Heart right ventricle (tissue), 16 donors: ENCODE measurements at regions of chr2 and their contacts with region 1.

Region 1: DNA sequence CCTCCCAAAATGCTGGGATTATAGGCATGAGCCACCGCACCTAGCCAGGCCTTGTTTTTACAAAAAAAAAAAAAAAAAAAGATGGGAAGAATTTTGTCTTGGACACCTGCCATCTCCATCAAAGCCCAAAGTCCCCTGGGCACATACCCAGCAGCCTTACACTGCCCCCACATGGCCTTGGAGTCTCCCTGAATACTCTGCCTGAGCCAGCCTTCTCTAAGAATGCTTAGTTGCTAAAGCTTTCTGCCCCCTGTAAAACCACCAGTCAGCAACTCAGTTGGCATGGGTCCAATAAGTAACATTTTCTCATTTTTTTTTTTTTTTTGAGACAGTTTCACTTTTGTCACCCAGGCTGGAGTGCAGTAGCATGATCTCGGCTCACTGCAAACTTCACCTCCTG is 40.6 kb downstream of the SPC25 start:
- DNase-seq: peak in 1 of 2 donors; percentile 39
- ATAC-seq: peak in 7 of 8 donors; percentile 48 to 82 (median 74)
- H3K4me3 ChIP-seq: no peak overlapping the region
- H3K27ac ChIP-seq: no peak overlapping the region
- H3K4me1 ChIP-seq: peaks cover 0 to 4% (median 0%) of the 10 kb centered on the region in 9 donors
- H3K27me3 ChIP-seq: no peaks in the 10 kb centered on the region
- CTCF ChIP-seq: peak in 7 of 9 donors; percentile 29 to 55 (median 46)

Region 2: GRCh38 chr2:168601741-168602140 is 247.9 kb before region 1 on chr2:
- intact Hi-C with region 1: no loop called
- DNase-seq: no peak
- ATAC-seq: no peak
- H3K4me3 ChIP-seq: no peak overlapping the region
- H3K27ac ChIP-seq: no peak overlapping the region
- H3K4me1 ChIP-seq: peaks cover 0 to 27% (median 19%) of the 10 kb centered on the region in 9 donors
- H3K27me3 ChIP-seq: no peaks in the 10 kb centered on the region
- CTCF ChIP-seq: no peak

Region 3: GRCh38 chr2:168712049-168712448 is 137.6 kb before region 1 on chr2:
- intact Hi-C with region 1: loop called in 1 of 10 experiments (anchors 10 kb)
- DNase-seq: no peak
- ATAC-seq: peak in 1 of 8 donors; percentile 37
- H3K4me3 ChIP-seq: no peak overlapping the region
- H3K27ac ChIP-seq: no peak overlapping the region
- H3K4me1 ChIP-seq: peaks cover 0 to 8% (median 0%) of the 10 kb centered on the region in 9 donors
- H3K27me3 ChIP-seq: no peaks in the 10 kb centered on the region
- CTCF ChIP-seq: no peak

Region 4: DNA sequence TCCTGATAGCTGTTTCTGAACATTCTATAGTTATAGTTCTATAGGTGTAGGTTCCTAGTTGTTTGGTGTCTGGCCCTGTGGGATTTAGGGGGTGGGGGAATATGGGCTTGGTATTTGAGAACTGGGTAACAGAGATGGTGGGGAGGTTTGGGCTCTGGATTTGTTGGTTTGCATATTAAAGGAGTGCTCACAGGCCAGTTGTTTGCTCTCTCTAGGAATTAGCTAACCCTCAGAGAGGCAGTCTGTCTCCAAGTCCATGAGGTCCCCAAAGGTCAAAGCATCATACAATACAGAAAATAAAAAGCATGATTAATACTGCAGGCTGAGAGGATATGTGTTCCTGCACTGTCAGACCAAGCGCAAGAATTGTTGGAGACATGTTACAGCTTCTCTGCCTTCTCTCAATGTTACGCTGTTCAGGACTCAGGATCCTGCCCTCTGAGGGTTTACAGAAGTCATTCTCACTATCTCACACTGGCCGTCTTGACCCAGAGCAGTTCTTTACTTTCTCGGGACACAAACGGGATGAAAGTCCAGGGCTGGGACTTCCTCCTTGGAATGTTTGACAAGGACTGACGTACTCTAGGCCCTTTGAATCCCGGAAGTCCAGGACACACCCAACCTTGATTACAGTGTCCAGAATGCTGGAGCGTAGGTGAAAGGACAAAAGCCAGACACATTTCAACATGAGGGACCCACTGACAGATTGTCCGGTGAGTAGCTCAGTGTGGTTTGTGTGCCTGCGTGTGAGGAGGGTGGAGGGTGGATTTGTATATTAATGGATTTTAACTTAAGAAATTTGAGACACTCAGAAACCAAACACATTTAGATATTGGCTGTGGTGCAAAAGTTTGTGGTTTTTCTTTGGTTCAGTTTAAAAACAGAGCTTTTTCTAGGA is 47.4 kb before region 1 on chr2 and contains the start of gene NOSTRIN:
- intact Hi-C with region 1: loop called in 1 of 10 experiments (anchors 5 kb)
- DNase-seq: peak in 1 of 2 donors; percentile 75
- ATAC-seq: peak; percentile 83 to 93 (median 90)
- H3K4me3 ChIP-seq: peak within 1 kb of the TSS; percentile 18 to 54 (median 42)
- H3K27ac ChIP-seq: peak within 1 kb of the TSS; percentile 8 to 85 (median 74)
- H3K4me1 ChIP-seq: peaks cover 0 to 71% (median 25%) of the 10 kb centered on the region in 9 donors
- H3K27me3 ChIP-seq: no peaks in the 10 kb centered on the region
- CTCF ChIP-seq: no peak
- total RNA-seq, gene NOSTRIN: 5.0 to 22.1 (median 12.2) TPM